ENCODE measurements at regions of chr7 and their contacts with region 1.

Region 1: GRCh38 chr7:99997545-99998137 is 17.8 kb upstream of the ZKSCAN1 start:
- DNase-seq: peak; percentile 38 to 67 (median 41)
- H3K4me3 ChIP-seq: peak overlapping the region; percentile 55
- H3K27ac ChIP-seq: peak overlapping the region in 1 of 2 donors; percentile 1
- H3K4me1 ChIP-seq: peaks cover 3% of the 10 kb centered on the region
- H3K27me3 ChIP-seq: no peaks in the 10 kb centered on the region
- CTCF ChIP-seq: peak in 1 of 3 donors; percentile 19
- EP300 ChIP-seq: no peak
- POLR2A ChIP-seq: no peak

Region 2: GRCh38 chr7:100044701-100045100 is 47.1 kb after region 1 on chr7:
- intact Hi-C with region 1: no loop called
- DNase-seq: no peak
- H3K4me3 ChIP-seq: no peak overlapping the region
- H3K27ac ChIP-seq: no peak overlapping the region
- H3K4me1 ChIP-seq: no peaks in the 10 kb centered on the region
- H3K27me3 ChIP-seq: no peaks in the 10 kb centered on the region
- CTCF ChIP-seq: no peak
- EP300 ChIP-seq: no peak
- POLR2A ChIP-seq: no peak

Region 3: GRCh38 chr7:100081535-100082102 is 84.0 kb after region 1 on chr7 and contains the start of gene ZNF3:
- intact Hi-C with region 1: loop called in 2 of 4 experiments (anchors 5 kb)
- DNase-seq: peak; percentile 97 to 99 (median 98)
- H3K4me3 ChIP-seq: peak within 1 kb of the TSS; percentile 100
- H3K27ac ChIP-seq: peak within 1 kb of the TSS in 1 of 2 donors; percentile 37
- H3K4me1 ChIP-seq: peaks cover 6% of the 10 kb centered on the region
- H3K27me3 ChIP-seq: no peaks in the 10 kb centered on the region
- CTCF ChIP-seq: peak; percentile 93 to 97 (median 96)
- EP300 ChIP-seq: no peak
- POLR2A ChIP-seq: peak; percentile 70
- total RNA-seq, gene ZNF3: 21.9 to 45.0 (median 38.4) TPM

Region 4: GRCh38 chr7:100167921-100168323 is 170.3 kb after region 1 on chr7:
- intact Hi-C with region 1: no loop called
- DNase-seq: peak in 4 of 5 donors; percentile 36 to 53 (median 47)
- H3K4me3 ChIP-seq: peak overlapping the region; percentile 43
- H3K27ac ChIP-seq: peak overlapping the region in 1 of 2 donors; percentile 59
- H3K4me1 ChIP-seq: peaks cover 6% of the 10 kb centered on the region
- H3K27me3 ChIP-seq: no peaks in the 10 kb centered on the region
- CTCF ChIP-seq: no peak
- EP300 ChIP-seq: no peak
- POLR2A ChIP-seq: no peak

Measured in ovary (tissue), 10 donors.